GM10248 (cell line): ENCODE measurements at regions of chr10 and their contacts with region 1.

Region 1: GRCh38 chr10:30687698-30688219 is 58.2 kb upstream of the LYZL2 start:
- DNase-seq: peak; percentile 65
- CTCF ChIP-seq: peak; percentile 87

Region 2: DNA sequence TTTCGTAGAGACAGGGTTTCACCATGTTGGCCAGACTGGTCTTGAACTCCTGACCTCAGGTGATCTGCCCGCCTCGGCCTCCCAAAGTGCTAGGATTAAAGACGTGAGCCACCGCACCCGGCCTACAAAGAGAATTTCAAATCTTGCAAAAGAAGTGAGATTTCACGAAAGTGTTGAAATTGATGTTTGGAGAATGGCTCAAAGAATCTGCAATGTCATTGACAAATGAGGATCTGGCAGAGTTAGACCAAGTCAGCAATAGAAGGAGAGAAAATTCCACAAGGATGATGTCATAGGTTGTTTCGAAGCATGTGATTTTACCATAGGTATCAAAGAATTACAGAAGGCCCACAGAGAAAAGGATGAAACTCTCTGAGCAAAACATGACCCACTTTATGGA is 129.9 kb before region 1 on chr10:
- CTCF ChIA-PET with region 1: no interaction called
- POLR2A ChIA-PET with region 1: no interaction called
- DNase-seq: no peak
- CTCF ChIP-seq: no peak

Region 3: DNA sequence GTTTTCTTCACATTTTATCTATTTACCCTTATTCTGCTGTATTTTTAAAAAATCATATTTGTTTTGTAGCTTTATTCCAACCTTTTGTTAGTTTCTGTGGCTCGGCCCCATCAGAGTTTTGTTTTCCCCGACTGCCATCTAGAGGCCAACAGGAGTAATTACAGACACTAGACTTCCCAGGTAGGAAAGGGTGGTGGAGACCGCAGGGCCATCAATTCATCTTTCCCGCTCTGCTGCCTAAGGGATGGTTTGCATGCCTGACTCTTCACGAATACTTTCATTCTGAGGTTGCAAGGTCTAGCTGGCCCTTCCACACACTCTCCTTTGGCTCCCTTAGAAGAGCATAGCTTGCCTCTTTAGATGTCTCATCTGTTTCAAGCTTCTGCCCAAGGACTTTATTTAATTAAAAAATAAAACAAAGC is 96.5 kb before region 1 on chr10:
- CTCF ChIA-PET with region 1: no interaction called
- POLR2A ChIA-PET with region 1: no interaction called
- DNase-seq: peak; percentile 47
- CTCF ChIP-seq: peak; percentile 45

Region 4: DNA sequence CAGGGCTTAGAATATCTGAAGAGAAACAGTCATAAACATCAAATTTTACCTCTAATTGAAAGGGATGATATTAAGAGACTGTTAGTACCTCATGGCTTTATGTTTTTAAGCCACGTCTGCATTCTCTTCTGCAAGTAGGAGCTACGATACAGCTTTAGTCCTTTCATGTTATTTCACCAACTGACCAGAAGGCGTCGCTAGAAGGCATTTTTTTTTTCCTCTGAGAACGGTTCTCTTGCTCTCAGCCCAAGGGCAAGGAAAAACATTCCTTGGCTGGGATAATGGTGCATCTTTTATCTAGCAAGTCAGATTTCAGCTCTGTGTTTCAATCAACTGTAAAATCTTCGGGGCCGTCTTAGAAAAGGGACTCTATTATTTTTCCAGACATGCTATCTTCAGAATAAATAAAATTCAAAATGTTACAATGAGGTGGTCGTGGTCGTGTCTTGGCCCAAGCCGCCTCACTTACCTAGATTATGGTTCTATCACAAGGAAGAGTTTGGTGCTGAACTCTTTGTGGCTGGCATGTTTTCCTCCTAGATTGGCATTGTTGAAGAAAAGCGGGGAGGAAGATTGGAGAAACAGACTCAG is 16.6 kb before region 1 on chr10:
- CTCF ChIA-PET with region 1: interaction called, 34 read pairs
- POLR2A ChIA-PET with region 1: no interaction called
- DNase-seq: peak; percentile 56
- CTCF ChIP-seq: peak; percentile 80

Region 5: GRCh38 chr10:30701451-30702173 is 13.9 kb after region 1 on chr10:
- CTCF ChIA-PET with region 1: interaction called, 38 read pairs
- POLR2A ChIA-PET with region 1: no interaction called
- DNase-seq: peak; percentile 48
- CTCF ChIP-seq: no peak

Region 6: GRCh38 chr10:30709229-30709628 is 21.5 kb after region 1 on chr10:
- CTCF ChIA-PET with region 1: interaction called, 31 read pairs
- POLR2A ChIA-PET with region 1: no interaction called
- DNase-seq: no peak
- CTCF ChIP-seq: no peak

Region 7: GRCh38 chr10:30722956-30723620 is 35.3 kb after region 1 on chr10:
- CTCF ChIA-PET with region 1: interaction called, 46 read pairs
- POLR2A ChIA-PET with region 1: no interaction called
- DNase-seq: no peak
- CTCF ChIP-seq: no peak

Region 8: GRCh38 chr10:30742471-30742870 is 54.7 kb after region 1 on chr10:
- CTCF ChIA-PET with region 1: interaction called, 10 read pairs
- POLR2A ChIA-PET with region 1: no interaction called
- DNase-seq: no peak
- CTCF ChIP-seq: no peak